ENCODE measurements at regions of chr12 and their contacts with region 1.

Region 1: DNA sequence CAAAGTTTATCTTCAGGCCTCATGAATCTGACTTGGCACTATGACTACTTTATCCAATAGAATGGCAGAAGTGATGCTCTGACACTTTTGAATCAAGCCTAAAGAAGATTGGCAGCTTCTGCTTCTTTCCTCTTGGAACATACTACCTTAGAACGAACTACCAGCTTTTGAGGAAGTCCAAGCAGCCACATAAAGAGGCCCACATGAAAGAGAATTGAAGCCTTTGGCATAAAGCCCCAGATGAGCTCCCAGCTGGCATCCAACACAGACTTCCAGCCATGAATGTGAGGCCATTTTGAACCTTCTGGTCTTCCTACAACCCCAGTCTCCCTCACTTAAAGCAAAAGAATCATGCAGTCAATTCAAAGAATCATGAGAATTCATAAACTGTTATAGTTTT is 65.8 kb downstream of the EEA1 start:
- DNase-seq: no peak
- H3K4me3 ChIP-seq: no peak overlapping the region
- H3K27ac ChIP-seq: no peak overlapping the region
- H3K4me1 ChIP-seq: no peaks in the 10 kb centered on the region
- H3K27me3 ChIP-seq: no peaks in the 10 kb centered on the region
- CTCF ChIP-seq: no peak

Region 2: GRCh38 chr12:92827836-92828431 is 35.3 kb before region 1 on chr12:
- intact Hi-C with region 1: loop called (anchors 1 kb)
- DNase-seq: no peak
- H3K4me3 ChIP-seq: no peak overlapping the region
- H3K27ac ChIP-seq: no peak overlapping the region
- H3K4me1 ChIP-seq: no peaks in the 10 kb centered on the region
- H3K27me3 ChIP-seq: no peaks in the 10 kb centered on the region
- CTCF ChIP-seq: peak in 2 of 3 experiments; percentile 10 to 40

Measured in ascending aorta (tissue), 2 donors.